IMR-90 (cell line): ENCODE measurements at regions of chr4 and their contacts with region 1.

Region 1: GRCh38 chr4:107666134-107666533 is 53.9 kb downstream of the PAPSS1 start:
- DNase-seq: peak; percentile 55
- ATAC-seq: peak; percentile 68
- H3K4me3 ChIP-seq: no peak overlapping the region
- H3K27ac ChIP-seq: no peak overlapping the region
- H3K4me1 ChIP-seq: peaks cover 2% of the 10 kb centered on the region; the same call in 1 of the 2 replicates
- H3K27me3 ChIP-seq: no peaks in the 10 kb centered on the region
- CTCF ChIP-seq: peak; percentile 66
- POLR2A ChIP-seq: no peak
- RAD21 ChIP-seq: peak; percentile 62

Region 2: DNA sequence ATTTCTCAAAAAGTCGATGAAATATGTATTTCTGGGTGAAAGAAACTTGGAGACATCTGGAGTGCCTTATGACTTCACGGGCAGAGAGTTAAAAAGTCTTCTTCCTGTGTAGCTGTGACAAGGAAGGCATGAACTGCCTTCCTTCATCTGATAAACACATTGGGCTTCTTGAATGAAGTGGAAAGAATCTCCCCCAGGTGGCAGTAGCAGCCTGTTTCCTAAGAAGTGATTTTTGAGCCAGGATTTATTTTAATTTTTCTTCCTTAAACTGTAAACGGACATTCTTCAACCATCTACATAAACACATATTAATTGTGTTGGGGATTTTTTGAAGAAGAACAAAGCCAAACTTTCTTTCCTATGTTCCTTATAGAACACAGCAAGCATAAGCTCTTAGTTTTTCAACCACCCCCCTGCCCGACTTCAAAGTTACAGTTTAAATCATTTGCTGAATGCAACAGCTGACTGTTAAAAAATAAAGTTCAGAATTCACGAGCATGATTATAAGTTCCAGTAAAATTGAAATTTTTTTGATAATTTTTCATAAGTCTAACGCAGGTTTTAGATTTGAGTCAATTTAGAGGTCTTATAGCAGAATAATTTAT is 1296.6 kb before region 1 on chr4:
- CTCF ChIA-PET with region 1: no interaction called
- POLR2A ChIA-PET with region 1: no interaction called
- dilution Hi-C with region 1: no loop called
- in situ Hi-C with region 1: no loop called
- intact Hi-C with region 1: loop called (anchors 2 kb)
- DNase-seq: peak; percentile 86
- ATAC-seq: peak; percentile 56
- H3K4me3 ChIP-seq: no peak overlapping the region
- H3K27ac ChIP-seq: no peak overlapping the region
- H3K4me1 ChIP-seq: peaks cover 3% of the 10 kb centered on the region
- H3K27me3 ChIP-seq: no peaks in the 10 kb centered on the region; the same call in 1 of the 2 replicates
- CTCF ChIP-seq: peak; percentile 83
- POLR2A ChIP-seq: no peak
- RAD21 ChIP-seq: peak; percentile 80

Region 3: GRCh38 chr4:107050525-107051135 is 615.5 kb before region 1 on chr4:
- CTCF ChIA-PET with region 1: no interaction called
- POLR2A ChIA-PET with region 1: no interaction called
- dilution Hi-C with region 1: no loop called
- in situ Hi-C with region 1: loop called (anchors 25 kb)
- intact Hi-C with region 1: loop called (anchors 5 kb)
- DNase-seq: peak; percentile 10
- ATAC-seq: no peak
- H3K4me3 ChIP-seq: no peak overlapping the region
- H3K27ac ChIP-seq: no peak overlapping the region
- H3K4me1 ChIP-seq: no peaks in the 10 kb centered on the region
- H3K27me3 ChIP-seq: no peaks in the 10 kb centered on the region
- CTCF ChIP-seq: peak; percentile 48
- POLR2A ChIP-seq: no peak
- RAD21 ChIP-seq: peak; percentile 43

Region 4: GRCh38 chr4:107183155-107183774 is 482.9 kb before region 1 on chr4:
- CTCF ChIA-PET with region 1: interaction called, 4 read pairs
- POLR2A ChIA-PET with region 1: no interaction called
- dilution Hi-C with region 1: no loop called
- in situ Hi-C with region 1: no loop called
- intact Hi-C with region 1: loop called (anchors 2 kb)
- DNase-seq: peak; percentile 58
- ATAC-seq: peak; percentile 98
- H3K4me3 ChIP-seq: no peak overlapping the region
- H3K27ac ChIP-seq: no peak overlapping the region
- H3K4me1 ChIP-seq: no peaks in the 10 kb centered on the region
- H3K27me3 ChIP-seq: 0 out of 2 replicates have a peak, but pooled peaks cover 1% of the 10 kb centered on the region
- CTCF ChIP-seq: peak; percentile 76
- POLR2A ChIP-seq: no peak
- RAD21 ChIP-seq: peak; percentile 63

Region 5: DNA sequence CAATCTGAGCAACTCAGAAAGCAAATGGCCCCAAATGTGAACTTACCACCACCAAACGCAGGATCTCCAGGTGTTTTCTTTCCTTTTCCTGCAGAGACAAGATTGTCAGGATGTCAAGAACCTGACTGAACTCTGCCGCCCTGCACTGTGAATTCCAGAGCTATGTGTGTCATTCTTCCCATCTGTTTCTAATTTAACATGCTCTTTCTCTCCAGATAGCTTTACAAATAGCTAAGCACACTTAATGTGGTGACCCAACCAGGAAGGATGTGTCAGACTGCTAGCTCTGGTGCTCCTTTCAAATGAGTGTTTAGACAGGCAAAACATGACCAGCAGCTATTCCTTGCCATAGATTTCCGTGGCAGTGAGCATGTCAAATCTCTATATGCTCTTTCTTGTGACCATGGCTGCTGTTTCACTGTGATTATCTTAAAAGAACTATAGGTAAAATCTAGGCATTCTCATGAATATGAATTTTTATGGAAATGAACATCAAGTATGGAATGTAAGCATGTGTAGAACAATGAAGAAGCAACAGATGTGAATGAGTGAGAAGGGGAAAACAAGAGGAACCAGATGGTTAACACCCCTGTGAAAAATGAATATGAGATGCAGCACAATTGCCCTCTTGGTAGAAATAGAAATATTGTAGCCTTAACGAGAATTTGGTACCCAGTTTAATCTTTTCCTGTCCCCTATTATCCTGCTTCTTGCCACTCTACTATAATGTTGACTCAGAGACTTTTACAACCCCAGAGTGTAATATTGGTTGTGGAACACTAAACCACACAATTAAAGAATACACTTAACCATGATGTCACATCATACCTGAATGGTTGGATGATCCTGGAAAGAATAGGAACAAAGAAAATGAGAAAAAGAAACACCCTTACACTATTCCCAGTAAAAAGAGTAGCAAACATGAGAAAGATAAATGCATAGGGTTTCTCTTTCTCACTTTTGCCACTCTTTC is 382.3 kb before region 1 on chr4:
- CTCF ChIA-PET with region 1: no interaction called
- POLR2A ChIA-PET with region 1: no interaction called
- dilution Hi-C with region 1: no loop called
- in situ Hi-C with region 1: no loop called
- intact Hi-C with region 1: no loop called
- DNase-seq: peak; percentile 95
- ATAC-seq: peak; percentile 88
- H3K4me3 ChIP-seq: no peak overlapping the region
- H3K27ac ChIP-seq: no peak overlapping the region
- H3K4me1 ChIP-seq: no peaks in the 10 kb centered on the region
- H3K27me3 ChIP-seq: no peaks in the 10 kb centered on the region
- CTCF ChIP-seq: no peak
- POLR2A ChIP-seq: no peak
- RAD21 ChIP-seq: no peak

Region 6: DNA sequence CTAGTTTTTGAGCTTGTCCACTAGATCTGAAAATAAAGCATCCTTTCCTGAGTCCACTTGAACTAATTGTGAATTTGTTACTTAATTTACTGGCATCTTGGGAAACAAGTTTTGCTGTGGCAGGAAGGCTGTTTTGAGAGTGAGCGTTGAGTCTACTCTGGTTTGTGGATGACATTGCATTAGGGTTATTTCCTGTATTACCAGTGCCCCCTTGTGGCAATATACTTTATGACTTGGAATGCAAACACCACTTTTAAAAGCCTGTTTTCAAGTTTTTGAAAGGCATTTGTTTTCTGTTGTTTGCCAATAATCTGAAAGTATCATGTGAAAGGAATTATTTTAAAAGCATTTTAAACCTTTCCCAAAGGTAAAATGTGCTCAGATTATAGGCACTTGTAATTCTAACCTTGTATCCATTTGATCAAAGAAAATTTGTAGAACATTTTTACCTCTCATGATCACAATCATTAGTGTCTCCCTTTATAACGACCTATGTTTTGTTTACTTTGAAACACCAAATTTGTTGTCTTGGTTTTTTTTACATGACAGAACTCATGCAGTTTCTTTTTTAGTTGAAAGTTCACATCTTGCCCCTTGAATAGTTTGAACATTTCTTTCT is 247.3 kb after region 1 on chr4:
- CTCF ChIA-PET with region 1: no interaction called
- POLR2A ChIA-PET with region 1: no interaction called
- dilution Hi-C with region 1: no loop called
- in situ Hi-C with region 1: no loop called
- intact Hi-C with region 1: loop called (anchors 5 kb)
- DNase-seq: peak; percentile 76
- ATAC-seq: peak; percentile 85
- H3K4me3 ChIP-seq: no peak overlapping the region
- H3K27ac ChIP-seq: no peak overlapping the region
- H3K4me1 ChIP-seq: no peaks in the 10 kb centered on the region
- H3K27me3 ChIP-seq: no peaks in the 10 kb centered on the region
- CTCF ChIP-seq: peak; percentile 88
- POLR2A ChIP-seq: no peak
- RAD21 ChIP-seq: peak; percentile 92

Region 7: GRCh38 chr4:108556588-108557200 is 890.6 kb after region 1 on chr4:
- CTCF ChIA-PET with region 1: no interaction called
- POLR2A ChIA-PET with region 1: no interaction called
- dilution Hi-C with region 1: no loop called
- in situ Hi-C with region 1: no loop called
- intact Hi-C with region 1: no loop called
- DNase-seq: no peak
- ATAC-seq: no peak
- H3K4me3 ChIP-seq: no peak overlapping the region
- H3K27ac ChIP-seq: no peak overlapping the region
- H3K4me1 ChIP-seq: no peaks in the 10 kb centered on the region
- H3K27me3 ChIP-seq: 0 out of 2 replicates have a peak, but pooled peaks cover 2% of the 10 kb centered on the region
- CTCF ChIP-seq: no peak
- POLR2A ChIP-seq: no peak
- RAD21 ChIP-seq: no peak